ENCODE measurements at regions of chr12 and their contacts with region 1.

Region 1: DNA sequence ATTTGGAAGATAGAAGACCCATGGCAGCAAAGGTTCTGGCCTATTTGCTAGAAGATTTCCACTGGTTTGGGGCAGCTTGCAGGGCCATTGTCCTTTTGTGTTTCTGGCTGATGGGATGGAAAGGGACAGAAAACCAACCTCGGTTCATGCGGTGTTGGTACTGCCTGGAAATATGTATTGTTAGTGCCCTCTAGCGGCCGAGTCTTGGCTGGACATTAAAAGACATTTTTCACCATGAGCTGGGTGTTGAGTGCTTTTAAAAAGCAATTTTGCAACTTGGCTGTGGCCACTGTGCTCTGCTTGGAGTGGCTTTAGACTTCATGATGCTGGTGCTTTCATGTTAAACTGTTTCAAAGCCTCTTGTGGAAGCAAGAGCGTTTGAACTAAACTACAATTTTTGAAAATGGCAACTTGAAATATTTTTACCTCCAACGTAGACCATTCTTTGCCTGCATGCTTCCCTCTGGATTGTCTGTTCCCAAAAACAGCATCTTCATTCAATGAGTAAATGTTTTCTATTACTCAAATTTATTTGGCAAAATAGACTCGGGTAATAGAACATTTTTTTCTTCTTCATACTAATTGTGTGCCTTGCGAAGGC is 102.7 kb upstream of the TBX5 start:
- DNase-seq: peak; percentile 79
- ATAC-seq: peak; percentile 49
- H3K4me3 Mint-ChIP-seq: no peak overlapping the region
- H3K27ac Mint-ChIP-seq: no peak overlapping the region
- H3K4me1 Mint-ChIP-seq: peaks cover 3% of the 10 kb centered on the region
- H3K27me3 Mint-ChIP-seq: peaks cover 21% of the 10 kb centered on the region

Region 2: GRCh38 chr12:114013575-114014345 is 494.9 kb before region 1 on chr12:
- CTCF ChIA-PET with region 1: no interaction called
- POLR2A ChIA-PET with region 1: no interaction called
- intact Hi-C with region 1: loop called in 1 of 2 experiments (anchors 1 kb)
- DNase-seq: no peak
- ATAC-seq: no peak
- H3K4me3 Mint-ChIP-seq: no peak overlapping the region
- H3K27ac Mint-ChIP-seq: no peak overlapping the region
- H3K4me1 Mint-ChIP-seq: no peaks in the 10 kb centered on the region
- H3K27me3 Mint-ChIP-seq: peaks cover 26% of the 10 kb centered on the region

Region 3: DNA sequence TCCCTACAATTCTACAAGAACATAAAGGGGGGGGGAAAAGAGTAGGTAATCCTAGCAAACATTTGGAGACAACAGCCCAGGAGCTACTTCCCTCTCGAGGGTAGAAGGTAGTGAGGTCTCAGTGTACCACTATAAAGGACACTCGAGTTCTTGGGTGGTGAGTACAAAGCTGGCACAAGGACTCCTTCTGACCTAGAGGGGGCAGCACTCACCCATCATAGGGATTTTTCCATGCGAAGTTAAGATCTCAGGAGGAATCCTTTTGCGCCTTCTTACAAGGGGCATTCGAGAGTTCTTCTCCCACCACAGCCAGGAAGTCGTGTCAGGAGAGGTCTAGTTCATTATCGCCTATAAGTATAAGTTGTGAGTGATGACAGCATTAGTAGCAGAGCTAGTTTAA is 342.3 kb before region 1 on chr12:
- CTCF ChIA-PET with region 1: interaction called, 5 read pairs
- POLR2A ChIA-PET with region 1: no interaction called
- intact Hi-C with region 1: loop called in 1 of 2 experiments (anchors 2 kb)
- DNase-seq: peak; percentile 11
- ATAC-seq: no peak
- H3K4me3 Mint-ChIP-seq: no peak overlapping the region
- H3K27ac Mint-ChIP-seq: no peak overlapping the region
- H3K4me1 Mint-ChIP-seq: no peaks in the 10 kb centered on the region
- H3K27me3 Mint-ChIP-seq: peaks cover 10% of the 10 kb centered on the region

Measured in activated CD4-positive, alpha-beta T cell treated with anti-CD3 and anti-CD28 coated beads for 36 hours (primary cell).